Naive thymus-derived CD4-positive, alpha-beta T cell (primary cell): ENCODE measurements at regions of chr12 and their contacts with region 1.

Region 1: DNA sequence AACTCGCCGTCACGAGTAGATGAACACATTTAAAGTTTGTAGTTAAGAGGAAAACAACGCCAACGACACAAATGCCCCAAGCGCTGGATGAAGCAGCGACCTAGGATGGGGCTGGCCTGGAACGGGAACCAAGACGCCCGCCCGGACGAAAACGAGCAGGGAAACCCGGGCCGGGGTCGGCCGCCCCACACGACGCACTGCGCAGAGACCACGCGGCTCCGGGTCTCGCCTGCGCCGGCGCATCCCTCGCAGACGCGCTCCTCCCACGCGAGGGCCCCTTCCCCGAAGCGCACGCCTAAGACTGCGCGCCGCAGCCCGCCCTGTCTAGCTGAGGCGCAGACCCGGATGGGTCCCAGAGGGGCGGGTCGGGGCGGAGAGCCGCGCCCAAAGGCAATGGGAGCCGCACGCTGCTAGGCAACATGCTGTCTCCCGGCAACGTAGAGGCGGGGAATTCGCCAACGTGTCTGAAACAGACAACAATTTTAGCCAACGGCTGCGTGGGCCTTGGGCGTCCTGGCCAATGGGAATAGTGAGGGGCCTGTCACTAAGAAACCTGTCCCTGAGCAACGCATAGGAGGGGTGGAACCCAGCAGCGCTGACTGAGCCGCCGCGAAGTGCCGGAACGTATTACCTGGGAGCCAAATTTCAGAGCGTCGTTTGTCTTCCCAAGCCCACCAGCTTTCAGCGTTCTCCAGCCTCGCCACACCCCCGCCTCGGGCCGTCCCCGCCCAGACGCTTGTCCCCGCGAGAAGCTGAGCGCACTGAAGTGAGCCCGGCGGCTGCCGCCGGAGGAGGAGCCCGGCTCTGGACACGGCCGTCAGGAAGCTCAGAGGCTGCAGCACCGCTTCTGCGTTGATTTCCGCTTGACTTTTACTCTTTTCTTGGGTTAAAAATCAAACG is 21.0 kb upstream of the CHFR start:
- DNase-seq: peak; percentile 79 to 98 (median 96)
- ATAC-seq: peak; percentile 93
- H3K4me3 ChIP-seq: peak overlapping the region; percentile 72
- H3K4me3 Mint-ChIP-seq: peak overlapping the region; percentile 83 to 98 (median 94)
- H3K27ac ChIP-seq: peak overlapping the region; percentile 92
- H3K27ac Mint-ChIP-seq: peak overlapping the region; percentile 92 to 99 (median 97)
- H3K4me1 ChIP-seq: no peaks in the 10 kb centered on the region
- H3K4me1 Mint-ChIP-seq: peaks cover 6 to 41% (median 22%) of the 10 kb centered on the region in 7 donors
- H3K27me3 ChIP-seq: no peaks in the 10 kb centered on the region
- H3K27me3 Mint-ChIP-seq: peaks cover 0 to 29% (median 0%) of the 10 kb centered on the region in 5 donors

Region 2: GRCh38 chr12:131949431-131950181 is 958.8 kb before region 1 on chr12 and contains the start of gene EP400:
- CTCF ChIA-PET with region 1: no interaction called
- POLR2A ChIA-PET with region 1: no interaction called
- intact Hi-C with region 1: loop called in 1 of 2 experiments (anchors 2 kb)
- DNase-seq: peak; percentile 78 to 95 (median 86)
- ATAC-seq: peak; percentile 97
- H3K4me3 ChIP-seq: peak within 1 kb of the TSS; percentile 78
- H3K4me3 Mint-ChIP-seq: peak within 1 kb of the TSS; percentile 80 to 93 (median 91)
- H3K27ac ChIP-seq: peak within 1 kb of the TSS; percentile 84
- H3K27ac Mint-ChIP-seq: peak within 1 kb of the TSS; percentile 88 to 95 (median 91)
- H3K4me1 ChIP-seq: peaks cover 7 to 16% of the 10 kb centered on the region in 2 donors
- H3K4me1 Mint-ChIP-seq: peaks cover 29 to 48% (median 32%) of the 10 kb centered on the region in 7 donors
- H3K27me3 ChIP-seq: no peaks in the 10 kb centered on the region
- H3K27me3 Mint-ChIP-seq: no peaks in the 10 kb centered on the region
- total RNA-seq, gene EP400: 62.2 to 86.8 (median 82.6) TPM

Region 3: GRCh38 chr12:132771126-132771838 is 137.1 kb before region 1 on chr12:
- CTCF ChIA-PET with region 1: interaction called, 29 read pairs
- POLR2A ChIA-PET with region 1: interaction called, 11 read pairs
- intact Hi-C with region 1: loop called (anchors 1 to 2 kb)
- DNase-seq: peak in 8 of 9 donors; percentile 38 to 82 (median 76)
- ATAC-seq: peak; percentile 80
- H3K4me3 ChIP-seq: no peak overlapping the region
- H3K4me3 Mint-ChIP-seq: peak overlapping the region; percentile 66 to 82 (median 73)
- H3K27ac ChIP-seq: peak overlapping the region; percentile 69
- H3K27ac Mint-ChIP-seq: peak overlapping the region; percentile 62 to 93 (median 84)
- H3K4me1 ChIP-seq: peaks cover 4 to 68% of the 10 kb centered on the region in 2 donors
- H3K4me1 Mint-ChIP-seq: peaks cover 29 to 89% (median 73%) of the 10 kb centered on the region in 7 donors
- H3K27me3 ChIP-seq: no peaks in the 10 kb centered on the region
- H3K27me3 Mint-ChIP-seq: no peaks in the 10 kb centered on the region

Region 4: DNA sequence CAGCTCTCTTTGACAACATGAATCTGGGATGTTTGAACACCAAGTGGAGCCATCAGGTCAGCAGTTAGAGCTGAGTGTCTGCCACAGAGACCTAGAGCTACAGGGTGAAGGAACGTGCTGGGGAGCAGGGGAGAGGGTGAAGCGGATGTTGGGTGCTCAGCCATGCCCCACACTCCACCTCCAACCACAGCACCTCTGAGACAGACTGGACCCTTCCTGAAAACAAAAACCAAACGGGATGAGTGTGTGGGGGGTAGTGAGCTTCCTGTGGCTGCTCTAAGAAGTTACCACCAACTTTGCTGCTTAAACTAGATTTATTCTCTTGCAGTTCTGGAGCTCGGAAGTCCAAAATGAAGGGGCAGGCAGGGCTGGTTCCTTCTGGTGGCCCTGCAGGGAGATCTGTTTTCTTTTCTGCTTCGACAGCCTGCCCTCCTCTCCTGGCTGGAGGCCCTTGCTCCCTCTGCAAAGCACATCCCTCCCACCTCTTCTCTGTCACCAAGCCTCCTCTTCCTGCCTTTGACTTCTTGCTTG is 74.1 kb before region 1 on chr12:
- CTCF ChIA-PET with region 1: interaction called, 7 read pairs
- POLR2A ChIA-PET with region 1: interaction called, 13 read pairs
- intact Hi-C with region 1: loop called (anchors 1 to 2 kb)
- DNase-seq: peak in 7 of 9 donors; percentile 32 to 60 (median 48)
- ATAC-seq: peak; percentile 67
- H3K4me3 ChIP-seq: no peak overlapping the region
- H3K4me3 Mint-ChIP-seq: peak overlapping the region; percentile 69 to 87 (median 79)
- H3K27ac ChIP-seq: peak overlapping the region; percentile 69
- H3K27ac Mint-ChIP-seq: peak overlapping the region; percentile 80 to 98 (median 95)
- H3K4me1 ChIP-seq: peaks cover 4 to 30% of the 10 kb centered on the region in 2 donors
- H3K4me1 Mint-ChIP-seq: peaks cover 23 to 54% (median 46%) of the 10 kb centered on the region in 7 donors
- H3K27me3 ChIP-seq: no peaks in the 10 kb centered on the region
- H3K27me3 Mint-ChIP-seq: no peaks in the 10 kb centered on the region

Region 5: GRCh38 chr12:132956011-132956788 is 47.8 kb after region 1 on chr12 and contains the start of gene ZNF605:
- CTCF ChIA-PET with region 1: no interaction called
- POLR2A ChIA-PET with region 1: interaction called, 5 read pairs
- intact Hi-C with region 1: loop called (anchors 1 kb)
- DNase-seq: peak; percentile 72 to 89 (median 80)
- ATAC-seq: peak; percentile 96
- H3K4me3 ChIP-seq: peak within 1 kb of the TSS; percentile 100
- H3K4me3 Mint-ChIP-seq: peak within 1 kb of the TSS; percentile 90 to 97 (median 95)
- H3K27ac ChIP-seq: peak within 1 kb of the TSS; percentile 85
- H3K27ac Mint-ChIP-seq: peak within 1 kb of the TSS; percentile 83 to 96 (median 91)
- H3K4me1 ChIP-seq: peaks cover 6 to 7% of the 10 kb centered on the region in 2 donors
- H3K4me1 Mint-ChIP-seq: peaks cover 19 to 53% (median 37%) of the 10 kb centered on the region in 7 donors
- H3K27me3 ChIP-seq: no peaks in the 10 kb centered on the region
- H3K27me3 Mint-ChIP-seq: no peaks in the 10 kb centered on the region
- total RNA-seq, gene ZNF605: 5.4 to 17.8 (median 11.8) TPM

Region 6: DNA sequence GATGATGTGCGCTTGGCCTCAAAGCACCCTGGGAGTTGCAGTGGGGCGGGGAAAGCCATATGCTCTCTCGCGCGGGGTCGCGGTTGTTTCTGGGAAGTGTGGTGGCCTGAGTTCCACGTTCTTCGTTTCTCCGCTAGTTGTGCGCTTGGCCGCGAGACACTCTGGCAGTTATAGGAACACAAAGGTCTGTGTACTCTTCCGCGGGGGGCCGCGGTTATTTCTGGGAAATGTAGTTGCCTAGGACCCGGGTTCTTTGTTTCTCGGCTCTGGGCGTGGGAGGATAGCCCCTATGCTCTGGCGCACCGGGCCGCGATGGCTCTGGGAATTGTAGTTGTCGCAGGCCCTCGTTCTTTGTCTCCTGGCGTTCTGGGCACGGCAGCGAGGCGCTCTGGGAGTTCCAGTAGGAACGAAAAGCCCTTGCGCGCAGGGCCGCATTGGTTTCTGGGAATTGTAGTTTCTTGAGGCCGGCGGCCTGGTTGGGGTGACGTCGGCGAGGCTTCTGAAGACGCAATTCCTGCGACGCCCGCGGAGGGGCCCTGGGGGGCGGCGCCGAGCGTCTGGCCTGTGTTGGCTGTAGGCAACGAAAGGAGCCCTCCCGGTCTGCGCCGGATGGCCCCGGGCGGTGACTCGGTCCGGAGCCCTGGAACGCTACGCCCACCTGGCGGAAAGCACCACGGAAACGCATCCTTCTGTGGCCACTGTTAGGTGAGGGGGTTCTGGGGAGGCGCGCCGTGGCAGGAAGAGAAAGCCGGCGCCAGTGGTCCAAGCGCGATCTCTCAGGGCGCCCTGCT is 172.2 kb after region 1 on chr12 and contains the start of gene ZNF140:
- CTCF ChIA-PET with region 1: no interaction called
- POLR2A ChIA-PET with region 1: interaction called, 6 read pairs
- intact Hi-C with region 1: loop called (anchors 1 kb)
- DNase-seq: peak; percentile 91 to 97 (median 96)
- ATAC-seq: peak; percentile 77
- H3K4me3 ChIP-seq: peak within 1 kb of the TSS; percentile 94
- H3K4me3 Mint-ChIP-seq: no peak within 1 kb of the TSS
- H3K27ac ChIP-seq: peak within 1 kb of the TSS; percentile 100
- H3K27ac Mint-ChIP-seq: peak within 1 kb of the TSS in 1 of 9 donors; percentile 41
- H3K4me1 ChIP-seq: peaks cover 7 to 11% of the 10 kb centered on the region in 2 donors
- H3K4me1 Mint-ChIP-seq: peaks cover 0 to 22% (median 10%) of the 10 kb centered on the region in 7 donors
- H3K27me3 ChIP-seq: no peaks in the 10 kb centered on the region
- H3K27me3 Mint-ChIP-seq: no peaks in the 10 kb centered on the region
- total RNA-seq, gene ZNF140: 11.2 to 29.9 (median 16.0) TPM